ENCODE measurements at regions of chr19 and their contacts with region 1.

Region 1: GRCh38 chr19:36837906-36838783 is at the start of gene ZNF790:
- DNase-seq: peak; percentile 93 to 98 (median 97)
- H3K4me3 ChIP-seq: peak within 1 kb of the TSS; percentile 65 to 98 (median 90)
- H3K27ac ChIP-seq: peak within 1 kb of the TSS; percentile 82 to 91
- H3K4me1 ChIP-seq: peaks cover 5 to 19% (median 14%) of the 10 kb centered on the region in 4 experiments
- H3K27me3 ChIP-seq: no peaks in the 10 kb centered on the region

Region 2: DNA sequence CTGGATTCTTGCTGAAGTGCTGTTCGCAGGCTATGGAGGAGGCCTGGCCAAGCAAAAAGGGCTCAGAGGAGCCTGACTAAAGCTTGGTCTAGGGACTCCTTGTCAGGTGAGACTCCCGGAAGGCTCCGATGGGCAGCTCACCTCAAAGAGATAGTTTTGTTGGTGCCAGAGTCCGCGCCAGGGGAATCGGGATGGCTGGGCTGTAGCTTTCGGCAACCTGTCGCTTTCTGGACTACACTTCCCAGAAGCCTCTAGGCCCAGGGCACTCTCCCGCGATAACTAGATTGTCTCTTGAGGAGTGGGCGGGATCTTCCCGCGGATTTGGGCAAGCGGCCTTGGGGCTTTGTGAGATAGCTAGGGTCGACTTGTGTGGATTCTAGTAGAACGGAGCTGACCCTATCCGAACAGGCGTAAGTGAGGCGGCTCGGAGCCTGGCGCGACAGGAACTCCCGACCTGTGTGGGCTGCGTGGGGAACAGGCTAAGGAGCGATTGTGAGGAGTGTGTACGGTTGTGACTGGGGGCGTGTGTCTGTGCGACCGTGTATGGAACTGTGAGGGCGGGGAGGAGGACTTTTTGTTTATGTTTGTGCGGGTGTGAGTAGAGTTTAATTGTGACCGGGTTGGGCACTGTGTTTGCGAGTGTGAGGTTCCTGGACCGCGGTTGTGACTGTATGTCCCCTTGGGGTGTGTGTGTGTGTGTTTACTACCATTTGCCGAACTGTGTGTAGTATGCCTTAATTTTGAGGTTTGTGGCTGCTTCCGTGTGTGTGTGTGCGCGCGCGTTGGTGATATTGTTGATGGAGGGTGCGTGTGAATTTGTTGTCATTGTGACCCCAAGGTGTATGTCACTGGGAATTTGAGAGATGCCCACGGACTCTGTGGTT is 12.7 kb after region 1 on chr19 and contains the start of gene ZNF345:
- CTCF ChIA-PET with region 1: interaction called, 20 read pairs
- POLR2A ChIA-PET with region 1: interaction called, 19 read pairs
- DNase-seq: peak; percentile 97 to 98 (median 98)
- H3K4me3 ChIP-seq: peak within 1 kb of the TSS; percentile 54 to 99 (median 95)
- H3K27ac ChIP-seq: peak within 1 kb of the TSS; percentile 93 to 94
- H3K4me1 ChIP-seq: peaks cover 4 to 27% (median 14%) of the 10 kb centered on the region in 4 experiments
- H3K27me3 ChIP-seq: no peaks in the 10 kb centered on the region